ENCODE measurements at regions of chr5 and their contacts with region 1.

Region 1: DNA sequence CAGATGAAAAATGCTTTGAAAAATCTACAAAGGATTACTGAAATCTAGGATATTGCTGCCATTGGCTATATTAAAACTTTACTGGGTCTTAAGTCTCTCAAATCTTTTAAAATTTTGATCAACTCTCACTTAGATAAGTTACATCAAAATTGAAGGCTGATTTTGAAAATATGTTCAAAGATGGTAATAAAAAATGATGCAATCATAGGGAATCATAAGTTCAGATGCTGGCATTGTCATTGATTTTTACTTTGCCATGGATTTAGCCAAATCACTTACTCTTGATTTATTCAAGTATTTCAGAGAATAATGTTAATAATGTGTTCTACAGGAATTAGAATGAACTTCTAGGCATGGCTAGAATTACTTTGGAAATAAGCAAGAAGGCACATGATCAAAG is 24.2 kb downstream of the LARS1 start:
- H3K4me3 Mint-ChIP-seq: no peak overlapping the region
- H3K27ac Mint-ChIP-seq: no peak overlapping the region
- H3K4me1 Mint-ChIP-seq: no peaks in the 10 kb centered on the region
- H3K27me3 Mint-ChIP-seq: no peaks in the 10 kb centered on the region

Region 2: DNA sequence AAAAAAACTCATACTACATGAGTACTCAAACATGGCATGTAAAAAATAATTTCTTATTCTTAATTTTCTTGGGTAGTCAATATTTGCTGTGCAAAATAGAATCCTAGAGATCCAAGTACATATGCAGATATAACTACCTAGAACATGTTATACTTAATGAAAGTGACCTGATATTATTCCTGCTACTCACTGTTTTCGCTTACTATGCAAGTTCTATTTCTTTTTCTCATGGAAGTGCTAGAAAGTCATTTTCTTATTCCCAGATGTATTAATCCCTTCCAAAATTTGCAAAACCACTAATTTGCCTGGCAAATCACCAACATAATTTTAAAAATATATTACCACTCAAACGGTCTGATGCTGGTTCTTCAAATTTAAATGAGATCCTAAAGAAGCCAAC is 33.7 kb before region 1 on chr5:
- intact Hi-C with region 1: loop called (anchors 5 kb)
- H3K4me3 Mint-ChIP-seq: no peak overlapping the region
- H3K27ac Mint-ChIP-seq: no peak overlapping the region
- H3K4me1 Mint-ChIP-seq: no peaks in the 10 kb centered on the region
- H3K27me3 Mint-ChIP-seq: no peaks in the 10 kb centered on the region

Region 3: DNA sequence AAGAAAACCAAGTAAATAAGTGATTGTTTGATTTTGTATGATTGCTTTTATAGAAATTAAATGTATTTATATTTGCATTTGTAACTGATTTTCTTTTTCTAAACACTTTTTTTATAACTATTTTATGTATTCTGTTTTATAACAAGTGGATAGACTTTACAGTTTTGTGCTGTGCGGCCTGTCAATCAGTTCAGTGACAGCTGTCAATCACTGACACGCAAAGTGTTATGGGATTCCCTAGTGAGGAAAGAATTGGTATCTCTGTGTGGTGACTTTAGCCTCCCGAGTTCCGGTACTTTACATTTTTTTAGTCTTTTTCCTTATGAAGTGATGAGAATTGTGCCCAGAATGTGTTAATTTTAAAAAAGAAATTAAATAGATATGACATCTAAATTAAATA is 341.4 kb after region 1 on chr5:
- intact Hi-C with region 1: loop called (anchors 5 kb)
- H3K4me3 Mint-ChIP-seq: no peak overlapping the region
- H3K27ac Mint-ChIP-seq: no peak overlapping the region
- H3K4me1 Mint-ChIP-seq: no peaks in the 10 kb centered on the region
- H3K27me3 Mint-ChIP-seq: no peaks in the 10 kb centered on the region

Measured in dendritic cell treated with granulocyte-macrophage colony-stimulating factor and Interleukin-4, amounts not matched to agents 40 ng/mL and 50 ng/mL, for 4 days (primary cell).